Activated T-helper 2 cell treated with anti-CD3 and anti-CD28 coated beads, Interferon-gamma antibody, Interleukin-2, Interleukin-4, amounts not matched to agents 10 μg/mL and 5 μg/mL and 100 μg/mL, durations not matched to agents 14 hours and 24 hours and 36 hours (primary cell): ENCODE measurements at regions of chr15 and their contacts with region 1.

Region 1: GRCh38 chr15:88904624-88905327 is 8.4 kb downstream of the MFGE8 start:
- DNase-seq: peak; percentile 90
- H3K4me3 Mint-ChIP-seq: no peak overlapping the region
- H3K27ac Mint-ChIP-seq: peak overlapping the region; percentile 51
- H3K4me1 Mint-ChIP-seq: peaks cover 16% of the 10 kb centered on the region
- H3K27me3 Mint-ChIP-seq: no peaks in the 10 kb centered on the region

Region 2: GRCh38 chr15:88865498-88866099 is 39.2 kb before region 1 on chr15:
- intact Hi-C with region 1: no loop called
- DNase-seq: no peak
- H3K4me3 Mint-ChIP-seq: no peak overlapping the region
- H3K27ac Mint-ChIP-seq: no peak overlapping the region
- H3K4me1 Mint-ChIP-seq: no peaks in the 10 kb centered on the region
- H3K27me3 Mint-ChIP-seq: no peaks in the 10 kb centered on the region

Region 3: DNA sequence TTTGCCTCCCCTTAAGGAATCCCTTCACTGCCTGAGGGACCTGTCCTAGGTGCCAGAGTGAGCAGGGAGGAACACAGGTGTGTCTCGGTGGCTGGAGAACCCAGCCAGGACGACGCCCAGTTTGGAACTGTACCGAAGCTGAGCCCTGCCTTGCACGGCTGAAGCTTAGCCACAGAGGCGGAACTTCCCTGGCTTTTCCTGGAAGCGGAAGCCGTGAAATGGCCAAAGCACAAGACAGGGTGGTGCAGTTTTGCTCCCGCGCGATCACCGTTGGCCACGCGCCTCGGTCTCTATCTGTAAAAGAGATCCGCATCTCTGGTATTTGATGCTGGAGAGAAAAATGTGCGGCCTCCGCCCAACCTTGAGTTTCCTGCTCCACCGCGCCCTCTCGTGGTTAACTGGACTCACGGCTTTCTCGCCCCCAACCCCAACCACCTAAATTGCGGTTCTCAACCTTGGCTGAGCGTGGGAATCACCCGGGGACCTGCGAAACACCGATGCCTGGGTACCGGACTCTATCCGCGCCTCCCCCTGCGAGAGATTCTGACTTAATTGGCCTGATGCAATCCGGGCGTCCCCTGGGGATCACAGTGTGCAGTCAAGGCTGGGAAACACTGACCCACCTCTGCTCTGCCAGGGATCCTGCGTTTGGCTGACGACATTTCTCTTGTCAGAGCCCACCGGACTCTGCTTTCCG is 112.7 kb after region 1 on chr15:
- intact Hi-C with region 1: loop called (anchors 2 kb)
- DNase-seq: peak; percentile 78
- H3K4me3 Mint-ChIP-seq: peak overlapping the region; percentile 43
- H3K27ac Mint-ChIP-seq: no peak overlapping the region
- H3K4me1 Mint-ChIP-seq: peaks cover 18% of the 10 kb centered on the region
- H3K27me3 Mint-ChIP-seq: peaks cover 35% of the 10 kb centered on the region